ENCODE measurements at regions of chr12 and their contacts with region 1.

Region 1: GRCh38 chr12:23949348-23950209 is at the start of gene SOX5:
- DNase-seq: peak; percentile 75
- ATAC-seq: peak; percentile 69
- H3K4me3 ChIP-seq: peak within 1 kb of the TSS; percentile 68 to 96 (median 75)
- H3K27ac ChIP-seq: peak within 1 kb of the TSS; percentile 86
- H3K4me1 ChIP-seq: peaks cover 46% of the 10 kb centered on the region
- H3K27me3 ChIP-seq: no peaks in the 10 kb centered on the region; a peak in 1 of 5 replicates
- CTCF ChIP-seq: no peak
- EP300 ChIP-seq: peak in 1 of 2 experiments; percentile 44; a peak in 1 of 4 replicates
- POLR2A ChIP-seq: peak in 1 of 2 experiments; percentile 48; a peak in 1 of 4 replicates
- RAD21 ChIP-seq: no peak
- total RNA-seq, gene SOX5: 42.9 and 76.4 TPM in 2 replicates

Region 2: GRCh38 chr12:23851602-23852001 is 98.0 kb before region 1 on chr12:
- CTCF ChIA-PET with region 1: no interaction called
- POLR2A ChIA-PET with region 1: no interaction called
- in situ Hi-C with region 1: no loop called
- intact Hi-C with region 1: loop called (anchors 5 kb)
- DNase-seq: no peak
- ATAC-seq: no peak
- H3K4me3 ChIP-seq: no peak overlapping the region
- H3K27ac ChIP-seq: no peak overlapping the region
- H3K4me1 ChIP-seq: peaks cover 57% of the 10 kb centered on the region
- H3K27me3 ChIP-seq: no peaks in the 10 kb centered on the region
- CTCF ChIP-seq: no peak
- EP300 ChIP-seq: no peak
- POLR2A ChIP-seq: no peak
- RAD21 ChIP-seq: no peak

Region 3: DNA sequence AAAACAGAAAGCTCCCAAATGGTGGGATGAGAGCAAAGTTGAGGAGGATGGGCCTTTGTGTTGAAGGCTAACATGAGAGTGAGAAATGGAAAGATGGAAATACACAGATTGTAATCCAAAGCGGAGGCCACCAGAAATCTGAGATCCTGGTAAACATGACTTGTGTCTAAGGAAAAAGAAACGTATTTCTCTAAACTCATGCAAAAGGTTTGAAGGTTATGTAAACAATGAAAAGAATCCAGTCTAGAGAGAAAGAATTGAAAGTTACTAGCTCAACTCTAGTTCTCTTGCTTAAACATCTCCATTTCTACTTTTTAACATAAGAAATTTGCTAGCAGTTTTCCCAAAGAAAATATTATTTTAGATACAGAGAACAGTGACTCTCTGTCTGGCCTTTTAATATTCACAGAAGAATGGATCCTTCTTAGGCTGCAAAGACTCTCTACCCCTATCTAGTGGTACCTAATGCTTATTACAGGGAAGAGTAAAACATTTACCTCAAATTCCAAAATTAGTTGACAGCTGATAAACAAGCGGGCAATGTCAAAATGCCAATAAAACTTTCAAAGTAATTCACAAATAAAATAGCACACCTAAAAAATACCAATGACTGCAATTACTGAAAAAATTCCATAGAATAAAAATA is 75.7 kb after region 1 on chr12:
- CTCF ChIA-PET with region 1: no interaction called
- POLR2A ChIA-PET with region 1: no interaction called
- in situ Hi-C with region 1: no loop called
- intact Hi-C with region 1: loop called (anchors 2 kb)
- DNase-seq: peak; percentile 84
- ATAC-seq: peak; percentile 87
- H3K4me3 ChIP-seq: peak overlapping the region in 2 of 3 experiments; percentile 50 to 53; a peak in 2 of 6 replicates
- H3K27ac ChIP-seq: peak overlapping the region; percentile 72
- H3K4me1 ChIP-seq: peaks cover 71% of the 10 kb centered on the region
- H3K27me3 ChIP-seq: no peaks in the 10 kb centered on the region; a peak in 1 of 5 replicates
- CTCF ChIP-seq: peak; percentile 54
- EP300 ChIP-seq: peak in 1 of 2 experiments; percentile 74; a peak in 2 of 4 replicates
- POLR2A ChIP-seq: no peak
- RAD21 ChIP-seq: no peak

Region 4: GRCh38 chr12:24039113-24039525 is 89.5 kb after region 1 on chr12:
- CTCF ChIA-PET with region 1: no interaction called
- POLR2A ChIA-PET with region 1: no interaction called
- in situ Hi-C with region 1: no loop called
- intact Hi-C with region 1: loop called (anchors 2 kb)
- DNase-seq: peak; percentile 96
- ATAC-seq: peak; percentile 81
- H3K4me3 ChIP-seq: peak overlapping the region in 2 of 3 experiments; percentile 62 to 65; a peak in 3 of 6 replicates
- H3K27ac ChIP-seq: peak overlapping the region; percentile 94
- H3K4me1 ChIP-seq: peaks cover 94% of the 10 kb centered on the region
- H3K27me3 ChIP-seq: no peaks in the 10 kb centered on the region
- CTCF ChIP-seq: no peak
- EP300 ChIP-seq: peak in 1 of 2 experiments; percentile 96; a peak in 2 of 4 replicates
- POLR2A ChIP-seq: no peak
- RAD21 ChIP-seq: no peak

Region 5: GRCh38 chr12:24069532-24070395 is 120.2 kb after region 1 on chr12:
- CTCF ChIA-PET with region 1: no interaction called
- POLR2A ChIA-PET with region 1: no interaction called
- in situ Hi-C with region 1: loop called (anchors 10 kb)
- intact Hi-C with region 1: no loop called
- DNase-seq: peak; percentile 98
- ATAC-seq: peak; percentile 100
- H3K4me3 ChIP-seq: peak overlapping the region in 2 of 3 experiments; percentile 8 to 41; a peak in 1 of 6 replicates
- H3K27ac ChIP-seq: peak overlapping the region; percentile 92
- H3K4me1 ChIP-seq: peaks cover 75% of the 10 kb centered on the region
- H3K27me3 ChIP-seq: no peaks in the 10 kb centered on the region
- CTCF ChIP-seq: 0 out of 2 replicates have a peak, but pooled peaks have one; percentile 7
- EP300 ChIP-seq: peak; percentile 34 to 96; a peak in 2 of 4 replicates
- POLR2A ChIP-seq: peak; percentile 33 to 55; a peak in 2 of 4 replicates
- RAD21 ChIP-seq: peak; percentile 20; the same call in 1 of the 2 replicates

Region 6: DNA sequence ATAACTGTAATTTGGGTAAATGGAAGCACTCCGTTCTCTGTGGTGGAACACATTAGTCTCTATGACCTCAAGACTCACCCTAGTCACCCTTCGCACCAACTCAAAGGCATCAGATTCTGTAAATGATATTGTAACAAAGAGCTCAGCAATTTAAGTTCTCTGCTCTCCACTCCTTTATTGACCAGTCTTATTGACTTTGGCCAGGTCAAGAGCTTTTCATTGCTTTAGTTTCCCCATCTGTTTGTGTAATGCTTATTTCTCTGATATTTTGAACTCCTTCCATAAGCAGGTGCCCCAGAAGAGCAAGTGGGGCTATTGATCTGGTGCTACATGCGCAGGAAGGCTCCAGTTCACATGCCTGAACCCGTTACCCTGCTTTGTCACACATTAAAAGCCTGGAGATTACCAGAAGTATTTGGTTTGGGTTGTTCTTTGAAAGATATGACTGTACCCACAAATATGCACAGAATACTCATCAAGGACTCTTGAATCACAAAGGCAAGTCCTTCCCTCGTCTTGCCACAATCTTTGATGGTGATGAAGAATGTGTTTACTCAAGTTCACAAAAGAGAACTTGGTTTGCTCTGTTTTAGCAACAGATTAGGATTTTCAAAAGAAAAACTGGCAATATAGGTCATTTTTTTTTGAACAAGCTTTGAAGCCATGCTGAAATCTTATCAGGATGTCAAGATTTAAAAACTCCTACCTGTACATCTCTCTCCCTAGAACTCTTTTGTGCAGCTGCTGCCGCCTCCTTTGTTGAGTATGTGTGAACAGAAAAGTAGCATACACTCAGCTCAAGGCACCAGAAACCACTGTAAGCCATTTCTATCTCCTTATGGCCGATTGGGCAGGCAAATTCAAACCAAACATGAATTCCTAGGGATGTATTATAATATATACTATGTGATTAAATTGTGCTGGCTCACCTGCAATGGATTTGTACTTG is 805.4 kb after region 1 on chr12:
- CTCF ChIA-PET with region 1: no interaction called
- POLR2A ChIA-PET with region 1: no interaction called
- in situ Hi-C with region 1: loop called (anchors 10 kb)
- intact Hi-C with region 1: loop called (anchors 10 kb)
- DNase-seq: peak; percentile 94
- ATAC-seq: peak; percentile 92
- H3K4me3 ChIP-seq: peak overlapping the region in 2 of 3 experiments; percentile 17 to 22; a peak in 2 of 6 replicates
- H3K27ac ChIP-seq: peak overlapping the region; percentile 77
- H3K4me1 ChIP-seq: peaks cover 98% of the 10 kb centered on the region
- H3K27me3 ChIP-seq: no peaks in the 10 kb centered on the region
- CTCF ChIP-seq: no peak
- EP300 ChIP-seq: peak in 1 of 2 experiments; percentile 89; a peak in 3 of 4 replicates
- POLR2A ChIP-seq: peak in 1 of 2 experiments; percentile 41; a peak in 2 of 4 replicates
- RAD21 ChIP-seq: no peak